Activated T-helper 1 cell treated with anti-CD3 and anti-CD28 coated beads, Interleukin-12 subunit alpha, Interleukin-12 subunit beta, Interleukin-2, Interleukin-4 antibody, amounts not matched to agents 30 ng/mL and 10 ng/mL and 1 ng/mL, durations not matched to agents 14 hours and 24 hours and 36 hours (primary cell): ENCODE measurements at regions of chr6 and their contacts with region 1.

Region 1: DNA sequence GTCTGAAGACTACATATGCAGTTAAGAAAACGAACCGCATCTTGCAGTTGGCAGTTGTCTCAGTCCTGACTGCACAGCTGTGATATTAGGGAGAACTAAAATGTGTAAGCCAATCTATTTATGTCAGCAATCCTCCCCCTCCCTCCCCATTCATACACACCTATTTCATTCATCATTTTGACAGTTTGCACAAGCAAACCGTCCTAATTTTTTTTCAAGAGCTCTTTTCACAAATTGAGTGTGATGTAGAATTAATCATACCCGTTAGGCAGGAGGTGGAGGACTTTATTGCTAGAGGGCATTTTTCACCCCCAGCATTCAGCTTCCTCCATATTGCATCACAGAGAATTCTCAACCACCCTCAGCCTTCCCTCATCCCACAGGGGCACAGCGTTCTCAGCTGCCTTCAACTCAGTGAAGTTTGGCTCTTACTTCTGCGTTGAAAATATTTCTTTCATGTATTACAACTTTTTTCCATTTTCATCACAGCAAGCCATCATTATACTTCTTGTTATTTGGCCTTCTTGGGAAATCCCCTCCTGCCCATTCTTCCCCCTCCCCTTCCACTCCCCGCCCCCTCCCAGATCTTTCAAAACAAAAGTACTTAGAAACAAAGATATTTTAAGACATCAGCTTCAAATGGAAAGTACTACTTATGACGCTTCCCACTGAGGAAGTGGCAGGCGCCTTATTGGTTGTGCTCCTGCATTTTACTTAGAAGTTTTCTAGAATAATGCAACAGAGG is 37.5 kb downstream of the NOX3 start:
- DNase-seq: peak; percentile 49
- H3K4me3 Mint-ChIP-seq: peak overlapping the region; percentile 73
- H3K27ac Mint-ChIP-seq: peak overlapping the region; percentile 100
- H3K4me1 Mint-ChIP-seq: peaks cover 44% of the 10 kb centered on the region
- H3K27me3 Mint-ChIP-seq: no peaks in the 10 kb centered on the region

Region 2: DNA sequence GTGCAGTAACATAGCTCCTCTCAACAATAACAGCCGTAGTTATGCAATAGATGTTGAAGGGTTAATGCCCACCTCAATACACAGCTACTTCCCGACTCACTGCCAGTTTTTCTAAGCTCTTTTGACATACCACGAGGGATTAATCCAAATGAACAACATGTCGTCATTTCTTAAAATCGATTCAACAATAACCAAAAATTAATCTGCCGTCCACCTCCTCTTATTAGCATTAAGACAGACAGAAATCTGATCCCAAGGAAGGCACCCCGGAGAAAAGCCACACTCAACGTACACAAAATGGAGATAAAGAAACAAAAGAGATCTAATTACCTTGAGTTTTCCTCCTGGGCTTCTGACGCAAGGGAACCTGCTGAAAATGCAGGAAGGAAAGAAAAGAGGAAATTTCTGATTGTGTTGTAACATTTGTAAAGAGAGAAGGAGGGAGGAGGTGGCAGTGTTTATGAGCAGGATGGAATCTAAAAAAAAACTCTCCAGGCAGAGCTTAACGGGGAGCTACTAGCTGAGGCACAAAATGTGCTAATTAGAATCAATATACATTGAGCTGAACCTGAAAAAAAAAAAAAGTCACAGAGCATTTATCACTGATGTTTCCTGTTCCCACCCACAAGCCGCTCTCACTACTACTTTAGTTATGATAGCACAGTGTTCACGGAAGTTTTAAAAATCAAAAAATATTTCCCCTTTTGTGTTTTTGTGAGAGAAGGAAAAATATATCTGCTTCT is 1170.9 kb before region 1 on chr6:
- intact Hi-C with region 1: loop called (anchors 5 kb)
- DNase-seq: no peak
- H3K4me3 Mint-ChIP-seq: peak overlapping the region; percentile 85
- H3K27ac Mint-ChIP-seq: peak overlapping the region; percentile 76
- H3K4me1 Mint-ChIP-seq: peaks cover 87% of the 10 kb centered on the region
- H3K27me3 Mint-ChIP-seq: no peaks in the 10 kb centered on the region

Region 3: DNA sequence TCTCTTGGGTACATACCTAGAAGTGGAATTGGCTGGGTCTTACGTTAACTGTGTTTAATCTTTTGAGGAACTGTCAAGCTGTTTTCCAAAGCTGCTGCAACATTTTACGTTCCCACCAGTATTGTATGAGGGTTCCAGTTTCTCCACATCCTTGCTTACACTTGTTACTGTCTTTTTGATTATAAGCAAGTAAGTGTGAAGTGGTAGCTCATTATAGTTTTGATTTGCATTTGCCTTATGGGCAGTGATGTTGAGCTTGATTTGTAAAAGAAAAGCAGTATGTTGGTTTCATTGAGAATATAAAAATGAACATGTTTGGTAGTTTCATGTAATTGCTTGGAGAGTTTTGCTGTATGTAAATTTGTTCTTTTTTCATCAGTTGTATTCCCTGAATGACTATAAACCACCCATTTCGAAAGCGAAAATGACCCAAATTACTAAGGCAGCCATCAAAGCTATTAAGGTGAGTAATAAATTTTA is 644.5 kb before region 1 on chr6:
- intact Hi-C with region 1: loop called (anchors 1 kb)
- DNase-seq: no peak
- H3K4me3 Mint-ChIP-seq: no peak overlapping the region
- H3K27ac Mint-ChIP-seq: peak overlapping the region; percentile 48
- H3K4me1 Mint-ChIP-seq: peaks cover 39% of the 10 kb centered on the region
- H3K27me3 Mint-ChIP-seq: no peaks in the 10 kb centered on the region

Region 4: DNA sequence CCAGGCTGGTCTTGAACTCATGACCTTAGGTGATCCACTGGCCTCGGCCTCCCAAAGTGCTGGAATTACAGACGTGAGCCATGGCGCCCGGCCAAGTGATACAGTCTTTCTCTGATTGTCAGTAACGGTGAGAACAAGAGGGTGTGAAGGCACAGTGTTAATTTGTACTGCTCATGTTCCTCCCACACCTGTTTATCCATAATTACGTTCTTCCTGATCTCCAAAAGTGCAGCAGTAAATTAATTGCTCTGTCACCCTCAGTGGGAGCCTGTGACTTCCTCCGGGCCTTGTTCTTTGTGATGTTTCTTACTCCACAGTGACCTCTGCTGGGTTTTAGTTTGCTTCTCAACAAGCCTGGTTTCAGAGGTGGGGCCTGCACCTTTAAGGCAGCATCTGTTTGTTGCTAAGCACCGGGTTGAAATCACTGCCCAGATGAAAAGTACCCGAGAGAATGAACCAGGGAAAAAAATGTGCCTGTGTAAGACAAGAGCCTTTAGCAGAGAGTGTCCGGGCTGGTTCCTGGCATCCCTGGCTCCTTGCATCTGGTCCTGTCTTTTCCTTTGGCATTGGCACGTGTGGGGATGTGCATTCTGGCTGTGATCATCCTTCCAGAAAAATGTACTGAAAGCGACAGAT is 243.5 kb before region 1 on chr6:
- intact Hi-C with region 1: loop called (anchors 1 kb)
- DNase-seq: peak; percentile 66
- H3K4me3 Mint-ChIP-seq: peak overlapping the region; percentile 27
- H3K27ac Mint-ChIP-seq: peak overlapping the region; percentile 76
- H3K4me1 Mint-ChIP-seq: peaks cover 54% of the 10 kb centered on the region
- H3K27me3 Mint-ChIP-seq: no peaks in the 10 kb centered on the region

Region 5: GRCh38 chr6:155314092-155314772 is 104.0 kb before region 1 on chr6 and contains the start of gene TFB1M:
- intact Hi-C with region 1: loop called (anchors 1 kb)
- DNase-seq: peak; percentile 99
- H3K4me3 Mint-ChIP-seq: peak within 1 kb of the TSS; percentile 98
- H3K27ac Mint-ChIP-seq: peak within 1 kb of the TSS; percentile 97
- H3K4me1 Mint-ChIP-seq: peaks cover 44% of the 10 kb centered on the region
- H3K27me3 Mint-ChIP-seq: no peaks in the 10 kb centered on the region
- total RNA-seq, gene TFB1M: 27.7 and 31.2 TPM in 2 replicates

Region 6: DNA sequence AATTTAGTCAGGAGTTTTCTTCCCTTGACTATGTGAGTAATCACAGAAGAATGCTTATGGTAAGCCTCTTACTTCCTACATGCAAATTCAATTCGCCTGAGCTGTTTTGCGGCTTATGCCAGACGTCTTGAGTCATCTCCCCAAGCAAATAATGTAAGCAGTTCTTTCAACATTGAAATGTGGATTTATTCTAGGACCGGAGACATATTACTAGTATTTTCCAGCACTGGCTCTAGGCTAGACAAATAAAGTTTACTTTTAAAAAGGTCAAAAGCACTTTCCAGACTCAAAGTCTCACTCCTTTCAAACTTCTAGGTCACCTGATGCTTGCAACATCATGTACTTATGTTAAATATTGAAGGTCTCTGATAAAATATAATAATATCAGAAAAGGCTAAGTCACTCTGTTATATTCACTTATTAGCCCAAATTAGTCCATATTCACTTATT is 75.5 kb after region 1 on chr6:
- intact Hi-C with region 1: loop called (anchors 1 kb)
- DNase-seq: no peak
- H3K4me3 Mint-ChIP-seq: no peak overlapping the region
- H3K27ac Mint-ChIP-seq: peak overlapping the region; percentile 10
- H3K4me1 Mint-ChIP-seq: peaks cover 9% of the 10 kb centered on the region
- H3K27me3 Mint-ChIP-seq: no peaks in the 10 kb centered on the region

Region 7: GRCh38 chr6:156686995-156687788 is 1269.0 kb after region 1 on chr6:
- intact Hi-C with region 1: loop called (anchors 1 kb)
- DNase-seq: peak; percentile 75
- H3K4me3 Mint-ChIP-seq: peak overlapping the region; percentile 92
- H3K27ac Mint-ChIP-seq: peak overlapping the region; percentile 83
- H3K4me1 Mint-ChIP-seq: peaks cover 27% of the 10 kb centered on the region
- H3K27me3 Mint-ChIP-seq: peaks cover 4% of the 10 kb centered on the region